PC-3 (cell line): ENCODE measurements at regions of chr10 and their contacts with region 1.

Region 1: DNA sequence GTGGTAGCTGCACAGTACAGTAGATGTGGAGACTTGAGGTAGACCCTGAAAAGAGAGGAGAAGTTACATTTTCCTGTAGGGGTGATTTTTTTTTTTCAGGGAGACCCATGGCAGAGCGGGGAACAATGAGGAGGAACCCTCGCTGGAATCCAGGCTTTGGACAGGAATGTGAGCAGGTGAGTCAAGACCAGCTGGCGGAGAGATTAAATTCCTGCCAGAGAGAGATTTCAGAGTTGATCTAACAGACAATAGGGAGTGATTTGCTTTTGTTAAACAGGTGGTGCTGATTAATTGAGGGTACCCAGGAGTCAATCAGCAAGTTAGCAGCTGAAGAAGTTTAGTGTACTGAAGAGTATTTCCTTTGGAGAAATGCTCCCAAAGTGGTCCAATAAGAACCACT is 41.6 kb upstream of the MINDY3 start:
- DNase-seq: no peak
- ATAC-seq: no peak
- H3K4me3 ChIP-seq: no peak overlapping the region
- H3K27ac ChIP-seq: no peak overlapping the region
- H3K4me1 ChIP-seq: no peaks in the 10 kb centered on the region
- H3K27me3 ChIP-seq: no peaks in the 10 kb centered on the region
- CTCF ChIP-seq: no peak

Region 2: GRCh38 chr10:16519908-16520861 is 618.3 kb after region 1 on chr10:
- CTCF ChIA-PET with region 1: no interaction called
- POLR2A ChIA-PET with region 1: no interaction called
- intact Hi-C with region 1: loop called (anchors 10 kb)
- DNase-seq: no peak
- ATAC-seq: no peak; the same call in 1 of the 2 replicates
- H3K4me3 ChIP-seq: no peak overlapping the region
- H3K27ac ChIP-seq: no peak overlapping the region
- H3K4me1 ChIP-seq: no peaks in the 10 kb centered on the region
- H3K27me3 ChIP-seq: peaks cover 6% of the 10 kb centered on the region; the same call in 1 of the 2 replicates
- CTCF ChIP-seq: no peak

Region 3: GRCh38 chr10:16545116-16545736 is 643.3 kb after region 1 on chr10:
- CTCF ChIA-PET with region 1: no interaction called
- POLR2A ChIA-PET with region 1: no interaction called
- intact Hi-C with region 1: loop called (anchors 1 kb)
- DNase-seq: peak; percentile 30
- ATAC-seq: no peak
- H3K4me3 ChIP-seq: no peak overlapping the region
- H3K27ac ChIP-seq: no peak overlapping the region
- H3K4me1 ChIP-seq: no peaks in the 10 kb centered on the region
- H3K27me3 ChIP-seq: no peaks in the 10 kb centered on the region
- CTCF ChIP-seq: peak; percentile 58

Region 4: DNA sequence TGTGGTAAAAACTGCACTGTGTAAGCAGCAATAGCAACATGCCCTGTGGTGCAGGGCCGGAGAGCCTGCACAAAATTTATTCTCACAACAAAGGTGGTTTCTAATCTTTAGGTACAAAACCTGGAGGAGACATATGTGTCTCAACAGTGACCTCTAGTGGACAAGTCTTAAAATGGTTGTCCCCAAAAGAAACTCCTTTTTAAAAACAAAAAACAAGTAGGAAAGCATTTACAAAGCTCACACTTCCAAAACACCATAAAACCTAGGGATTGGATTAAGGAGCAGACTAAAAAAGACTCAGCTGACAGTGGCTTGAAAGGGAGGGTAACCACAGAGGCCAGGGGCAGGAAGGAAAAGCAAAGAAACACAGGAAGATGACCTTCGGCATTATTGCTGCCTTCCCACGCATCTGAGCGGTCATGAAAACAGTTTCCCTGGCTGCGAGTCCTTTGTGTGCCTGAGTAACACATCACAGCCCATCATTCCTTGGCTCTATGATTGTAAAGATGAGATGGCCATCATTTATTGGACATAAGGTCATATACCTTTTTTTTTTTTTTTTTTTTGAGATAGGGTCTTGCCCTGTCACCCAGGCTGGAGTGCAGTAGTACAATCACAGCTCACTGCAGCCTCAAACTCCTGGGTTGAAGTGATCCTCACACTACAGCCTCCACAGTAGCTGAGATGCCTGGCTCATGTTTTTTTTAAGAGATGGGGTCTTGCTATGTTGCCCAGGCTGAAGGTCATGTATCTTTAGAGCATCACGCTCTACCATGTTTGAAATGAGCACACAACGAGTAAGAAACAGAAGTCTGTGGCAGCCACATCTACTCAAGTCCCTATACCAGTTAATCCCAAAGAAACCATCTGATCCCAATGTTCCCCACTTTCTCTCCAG is 875.8 kb after region 1 on chr10:
- CTCF ChIA-PET with region 1: no interaction called
- POLR2A ChIA-PET with region 1: no interaction called
- intact Hi-C with region 1: loop called (anchors 2 kb)
- DNase-seq: peak; percentile 47
- ATAC-seq: no peak
- H3K4me3 ChIP-seq: no peak overlapping the region
- H3K27ac ChIP-seq: no peak overlapping the region
- H3K4me1 ChIP-seq: no peaks in the 10 kb centered on the region
- H3K27me3 ChIP-seq: no peaks in the 10 kb centered on the region
- CTCF ChIP-seq: peak; percentile 67